Activated T-helper 1 cell treated with anti-CD3 and anti-CD28 coated beads, Interleukin-12 subunit alpha, Interleukin-12 subunit beta, Interleukin-2, Interleukin-4 antibody, amounts not matched to agents 30 ng/mL and 10 ng/mL and 1 ng/mL, durations not matched to agents 14 hours and 24 hours and 36 hours (primary cell): ENCODE measurements at regions of chr4 and their contacts with region 1.

Region 1: DNA sequence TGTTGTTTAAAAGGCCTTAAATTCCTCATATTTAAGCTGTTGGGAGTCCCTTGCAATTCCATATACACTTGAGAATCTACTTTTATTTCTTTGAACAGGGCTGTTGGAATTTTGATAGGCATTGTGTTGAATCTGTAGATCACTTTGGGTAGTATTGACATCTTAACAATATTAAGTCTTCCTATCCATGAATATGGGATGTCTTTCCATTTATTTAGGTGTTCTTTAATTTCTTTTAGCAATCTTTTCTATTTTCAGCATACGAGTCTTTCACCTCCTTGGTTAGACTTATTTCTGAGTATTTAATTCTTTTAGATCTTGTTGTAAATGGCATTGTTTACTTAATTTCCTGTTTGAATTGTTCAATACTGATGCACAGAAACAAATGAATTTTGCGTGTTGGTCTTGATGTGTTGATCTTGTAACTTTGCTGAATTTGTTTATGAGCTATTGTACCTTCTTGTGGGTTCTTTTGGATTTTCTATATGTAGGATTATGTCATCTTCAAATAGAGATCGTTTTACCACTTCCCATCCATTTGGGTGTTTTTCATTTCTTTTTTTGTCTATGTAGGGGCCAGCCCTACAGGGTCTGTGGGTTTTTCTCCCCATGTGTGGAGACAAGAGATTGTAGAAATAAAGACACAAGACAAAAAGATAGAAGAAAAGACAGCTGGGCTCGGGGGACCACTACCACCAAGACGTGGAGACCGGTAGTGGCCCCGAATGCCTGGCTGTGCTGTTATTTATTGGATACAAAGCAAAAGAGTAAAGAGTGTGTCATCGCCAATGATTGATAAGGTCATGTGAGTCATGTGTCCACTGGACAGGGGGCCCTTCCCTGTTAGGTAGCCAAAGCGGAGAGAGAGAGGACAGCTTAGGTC is 18.2 kb upstream of the CTBP1 start:
- DNase-seq: no peak
- H3K4me3 Mint-ChIP-seq: peak overlapping the region; percentile 76
- H3K27ac Mint-ChIP-seq: peak overlapping the region; percentile 95
- H3K4me1 Mint-ChIP-seq: peaks cover 29% of the 10 kb centered on the region
- H3K27me3 Mint-ChIP-seq: no peaks in the 10 kb centered on the region

Region 2: GRCh38 chr4:498328-498904 is 768.7 kb before region 1 on chr4:
- intact Hi-C with region 1: no loop called
- DNase-seq: no peak
- H3K4me3 Mint-ChIP-seq: peak overlapping the region; percentile 97
- H3K27ac Mint-ChIP-seq: peak overlapping the region; percentile 96
- H3K4me1 Mint-ChIP-seq: peaks cover 32% of the 10 kb centered on the region
- H3K27me3 Mint-ChIP-seq: no peaks in the 10 kb centered on the region

Region 3: DNA sequence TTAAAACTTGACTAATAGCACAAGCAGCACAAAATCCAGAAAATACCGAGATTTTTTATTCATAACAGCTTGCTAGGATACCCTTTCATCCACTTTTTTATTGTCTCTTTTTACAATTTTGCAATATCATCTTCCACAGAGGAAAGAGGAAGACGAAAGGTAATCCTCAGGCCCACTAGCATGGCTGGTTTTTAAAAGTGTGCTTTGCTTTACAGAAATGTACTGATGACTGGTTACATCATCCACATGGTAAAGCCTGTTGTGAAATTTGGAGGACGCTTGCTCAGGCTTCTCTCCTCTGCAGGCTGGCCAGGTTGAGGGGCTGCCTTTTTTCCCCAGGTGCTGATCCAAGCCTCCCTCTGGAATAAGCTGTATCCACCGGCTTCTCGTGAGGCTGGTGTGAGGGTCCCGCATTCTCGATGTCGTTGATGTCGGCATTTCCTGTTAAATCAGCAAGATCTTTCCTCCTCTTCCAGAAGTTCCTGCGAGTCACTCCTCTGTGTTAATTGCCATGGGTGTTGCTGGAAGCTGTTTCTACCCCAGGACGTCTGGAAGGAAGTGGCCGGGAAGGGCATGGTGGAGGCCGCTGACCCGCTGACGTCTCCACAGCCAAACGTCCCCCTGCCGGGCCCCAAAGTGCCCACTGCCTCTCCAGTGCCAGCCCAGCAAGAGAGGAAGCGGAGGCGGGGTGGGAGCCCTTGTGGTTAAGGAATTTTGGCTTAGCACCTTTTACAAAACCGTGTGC is 288.0 kb before region 1 on chr4:
- intact Hi-C with region 1: no loop called
- DNase-seq: no peak
- H3K4me3 Mint-ChIP-seq: no peak overlapping the region
- H3K27ac Mint-ChIP-seq: no peak overlapping the region
- H3K4me1 Mint-ChIP-seq: no peaks in the 10 kb centered on the region
- H3K27me3 Mint-ChIP-seq: no peaks in the 10 kb centered on the region

Region 4: DNA sequence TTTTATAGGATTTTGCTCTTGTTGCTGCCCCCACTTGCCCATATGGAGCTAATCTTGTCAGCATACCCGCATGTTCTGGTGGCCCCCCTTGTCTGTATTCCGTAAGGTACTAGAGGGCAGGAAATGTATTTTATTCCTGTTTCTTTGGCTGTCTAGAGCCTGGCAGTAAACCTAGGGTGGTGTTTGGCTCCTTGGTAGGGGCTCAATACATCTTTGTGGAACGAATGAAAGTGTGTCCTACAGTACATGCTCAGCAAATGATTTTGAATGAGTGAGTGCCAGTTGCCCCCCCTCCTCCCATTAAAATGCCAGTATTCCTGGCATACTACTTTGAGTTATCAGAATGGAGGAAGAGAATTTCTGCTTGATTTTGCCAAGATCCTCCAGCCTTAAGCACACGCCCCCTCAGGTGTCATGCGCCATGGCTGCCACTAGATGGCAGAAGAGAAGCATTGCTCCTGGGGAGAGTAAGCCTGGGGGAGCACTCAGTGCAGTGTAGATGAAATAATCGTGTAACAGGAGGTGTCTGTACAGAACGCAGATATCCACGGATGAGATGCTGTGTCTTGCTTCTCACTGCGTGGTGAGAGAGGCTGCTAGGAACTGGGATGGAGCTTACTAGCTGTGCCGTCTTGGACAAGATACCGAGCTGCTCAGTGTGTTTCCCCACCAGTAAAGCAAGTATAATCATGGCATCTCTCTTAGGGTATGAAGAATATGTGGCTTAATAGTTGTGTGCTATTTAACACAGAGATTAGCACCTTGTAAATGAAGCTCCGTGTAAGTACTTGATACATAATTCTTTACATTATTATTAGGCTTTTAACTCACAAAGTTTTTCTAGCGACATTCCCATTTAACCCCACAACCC is 136.6 kb before region 1 on chr4:
- intact Hi-C with region 1: loop called (anchors 1 kb)
- DNase-seq: peak; percentile 70
- H3K4me3 Mint-ChIP-seq: no peak overlapping the region
- H3K27ac Mint-ChIP-seq: no peak overlapping the region
- H3K4me1 Mint-ChIP-seq: peaks cover 5% of the 10 kb centered on the region
- H3K27me3 Mint-ChIP-seq: peaks cover 14% of the 10 kb centered on the region

Region 5: GRCh38 chr4:1187182-1187581 is 79.9 kb before region 1 on chr4:
- intact Hi-C with region 1: loop called (anchors 1 kb)
- DNase-seq: peak; percentile 34
- H3K4me3 Mint-ChIP-seq: no peak overlapping the region
- H3K27ac Mint-ChIP-seq: peak overlapping the region; percentile 28
- H3K4me1 Mint-ChIP-seq: peaks cover 30% of the 10 kb centered on the region
- H3K27me3 Mint-ChIP-seq: no peaks in the 10 kb centered on the region

Region 6: DNA sequence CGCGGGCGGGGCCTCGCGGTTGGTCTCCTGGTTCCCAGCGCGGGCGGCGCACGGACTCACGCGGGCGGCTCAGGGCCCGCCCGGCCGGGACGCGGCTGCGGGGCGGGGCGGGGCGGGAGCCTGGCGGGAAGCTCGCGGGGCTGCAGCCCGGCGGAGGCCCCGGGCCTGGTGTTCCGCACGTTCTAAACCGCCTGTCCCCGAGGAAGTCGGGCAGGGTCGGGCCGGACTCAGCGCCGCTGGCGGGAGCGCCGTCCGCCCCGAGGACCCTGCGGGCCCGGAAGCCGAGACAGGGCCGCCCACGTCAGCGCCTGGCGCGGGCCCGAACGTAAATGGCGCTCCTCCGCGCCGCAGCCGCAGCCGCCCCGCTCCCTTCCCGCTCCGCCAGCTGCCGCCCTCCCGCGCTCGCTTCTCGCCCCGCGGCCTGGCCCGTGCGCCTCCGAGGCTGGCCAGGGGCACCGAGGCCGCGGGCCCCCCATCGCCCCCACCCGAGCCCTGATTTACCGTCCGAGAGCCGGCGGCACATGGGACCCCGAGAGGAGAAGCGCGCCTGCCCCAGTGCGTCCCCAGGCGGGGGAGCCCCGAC is 17.9 kb before region 1 on chr4:
- intact Hi-C with region 1: loop called (anchors 1 kb)
- DNase-seq: peak; percentile 83
- H3K4me3 Mint-ChIP-seq: peak overlapping the region; percentile 89
- H3K27ac Mint-ChIP-seq: peak overlapping the region; percentile 96
- H3K4me1 Mint-ChIP-seq: peaks cover 57% of the 10 kb centered on the region
- H3K27me3 Mint-ChIP-seq: no peaks in the 10 kb centered on the region

Region 7: GRCh38 chr4:1309261-1310010 is 42.3 kb after region 1 on chr4:
- intact Hi-C with region 1: no loop called
- DNase-seq: peak; percentile 41
- H3K4me3 Mint-ChIP-seq: peak overlapping the region; percentile 49
- H3K27ac Mint-ChIP-seq: peak overlapping the region; percentile 36
- H3K4me1 Mint-ChIP-seq: peaks cover 52% of the 10 kb centered on the region
- H3K27me3 Mint-ChIP-seq: no peaks in the 10 kb centered on the region

Region 8: DNA sequence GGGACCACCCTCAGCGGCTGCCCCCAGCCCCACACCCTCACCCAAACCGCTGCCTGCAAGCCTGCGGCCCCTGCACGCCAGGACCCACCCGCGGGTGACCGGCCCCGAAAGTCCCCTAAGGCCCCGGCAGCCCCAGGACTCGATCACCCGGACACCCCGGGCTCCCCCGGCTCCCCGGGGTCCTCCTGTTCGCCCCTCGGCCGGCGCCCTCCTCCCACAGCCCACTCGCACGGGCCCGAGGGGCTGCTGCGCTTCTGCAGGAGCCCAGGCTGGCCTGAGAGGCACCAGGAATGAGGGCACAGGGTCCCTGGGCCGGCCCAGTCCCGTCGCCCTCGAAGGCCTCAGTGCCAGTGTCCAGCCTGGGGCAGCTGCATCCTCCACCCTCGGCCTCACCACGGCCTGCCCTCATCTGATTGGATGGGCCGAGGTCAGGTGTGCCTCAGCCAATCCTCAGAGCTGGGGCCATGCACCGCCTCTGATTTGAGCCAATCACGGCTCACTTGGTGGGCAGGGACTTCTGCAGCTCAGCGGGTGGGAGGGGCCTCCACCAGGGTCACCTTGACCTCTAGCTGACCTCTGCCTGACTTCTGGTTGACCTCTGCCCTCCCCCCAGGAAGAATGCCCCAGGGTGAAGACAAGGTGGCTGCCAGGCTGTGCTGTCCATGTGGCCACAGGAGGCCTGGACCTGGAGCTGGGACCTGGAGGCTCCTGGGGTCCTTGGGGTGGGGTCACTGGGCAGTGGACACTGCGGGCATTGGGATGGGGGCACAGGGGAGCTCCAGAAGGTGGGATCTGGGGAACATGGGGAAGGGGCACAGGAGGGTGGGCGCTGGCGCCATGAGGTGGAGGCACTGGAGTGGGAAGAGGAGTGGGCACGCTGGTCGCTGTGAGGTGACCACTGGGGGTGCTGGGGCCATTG is 236.7 kb after region 1 on chr4:
- intact Hi-C with region 1: no loop called
- DNase-seq: no peak
- H3K4me3 Mint-ChIP-seq: no peak overlapping the region
- H3K27ac Mint-ChIP-seq: no peak overlapping the region
- H3K4me1 Mint-ChIP-seq: no peaks in the 10 kb centered on the region
- H3K27me3 Mint-ChIP-seq: no peaks in the 10 kb centered on the region